Activated naive CD4-positive, alpha-beta T cell treated with anti-CD3 and anti-CD28 coated beads for 36 hours (primary cell): ENCODE measurements at regions of chr19 and their contacts with region 1.

Region 1: DNA sequence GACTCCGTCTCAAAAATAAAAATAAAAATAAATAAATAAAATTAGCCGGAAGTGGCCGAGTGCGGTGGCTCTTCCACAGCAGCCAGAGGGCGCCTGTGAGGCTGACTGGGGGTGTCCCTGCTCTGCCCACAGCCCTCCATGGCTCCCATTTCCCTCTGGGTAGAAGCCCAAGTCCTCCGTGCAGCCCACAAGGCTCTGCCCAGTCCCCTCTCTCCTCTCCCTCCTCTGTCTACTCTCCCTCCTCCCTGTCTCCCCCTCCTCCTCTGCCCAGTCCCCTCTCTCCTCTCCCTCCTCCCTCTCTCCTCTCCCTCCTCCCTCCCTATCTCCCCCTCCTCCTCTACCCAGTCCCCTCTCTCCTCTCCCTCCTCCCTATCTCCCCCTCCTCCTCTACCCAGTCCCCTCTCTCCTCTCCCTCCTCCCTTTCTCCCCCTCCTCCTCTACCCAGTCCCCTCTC is 20.4 kb downstream of the MISP start:
- DNase-seq: peak; percentile 65
- H3K4me3 Mint-ChIP-seq: no peak overlapping the region
- H3K27ac Mint-ChIP-seq: no peak overlapping the region
- H3K4me1 Mint-ChIP-seq: peaks cover 3% of the 10 kb centered on the region
- H3K27me3 Mint-ChIP-seq: no peaks in the 10 kb centered on the region

Region 2: DNA sequence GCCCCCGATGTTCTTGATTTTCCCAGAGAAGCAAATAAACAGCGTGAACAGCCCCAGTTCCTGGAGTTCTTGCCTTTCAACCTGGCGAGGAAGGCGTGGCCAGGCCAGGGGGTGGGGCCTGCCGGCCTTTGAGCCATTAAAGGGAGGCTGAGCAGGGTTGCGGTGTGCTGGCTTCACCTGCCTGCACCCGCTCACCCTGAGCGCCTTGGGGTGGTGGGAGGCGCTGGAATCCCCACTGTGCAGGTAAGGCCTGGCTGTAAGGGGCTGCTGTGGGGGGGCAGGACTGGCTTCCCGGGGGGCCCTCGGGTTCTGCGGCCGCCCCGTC is 23.1 kb before region 1 on chr19:
- CTCF ChIA-PET with region 1: no interaction called
- intact Hi-C with region 1: no loop called
- DNase-seq: no peak
- H3K4me3 Mint-ChIP-seq: no peak overlapping the region
- H3K27ac Mint-ChIP-seq: no peak overlapping the region
- H3K4me1 Mint-ChIP-seq: no peaks in the 10 kb centered on the region
- H3K27me3 Mint-ChIP-seq: no peaks in the 10 kb centered on the region

Region 3: GRCh38 chr19:984165-984967 is 213.0 kb after region 1 on chr19 and contains the start of gene WDR18:
- CTCF ChIA-PET with region 1: interaction called, 4 read pairs
- intact Hi-C with region 1: loop called (anchors 2 kb)
- DNase-seq: peak; percentile 94
- H3K4me3 Mint-ChIP-seq: peak within 1 kb of the TSS; percentile 92
- H3K27ac Mint-ChIP-seq: peak within 1 kb of the TSS; percentile 91
- H3K4me1 Mint-ChIP-seq: peaks cover 21% of the 10 kb centered on the region
- H3K27me3 Mint-ChIP-seq: no peaks in the 10 kb centered on the region
- total RNA-seq, gene WDR18: 77.8 to 82.0 TPM

Region 4: DNA sequence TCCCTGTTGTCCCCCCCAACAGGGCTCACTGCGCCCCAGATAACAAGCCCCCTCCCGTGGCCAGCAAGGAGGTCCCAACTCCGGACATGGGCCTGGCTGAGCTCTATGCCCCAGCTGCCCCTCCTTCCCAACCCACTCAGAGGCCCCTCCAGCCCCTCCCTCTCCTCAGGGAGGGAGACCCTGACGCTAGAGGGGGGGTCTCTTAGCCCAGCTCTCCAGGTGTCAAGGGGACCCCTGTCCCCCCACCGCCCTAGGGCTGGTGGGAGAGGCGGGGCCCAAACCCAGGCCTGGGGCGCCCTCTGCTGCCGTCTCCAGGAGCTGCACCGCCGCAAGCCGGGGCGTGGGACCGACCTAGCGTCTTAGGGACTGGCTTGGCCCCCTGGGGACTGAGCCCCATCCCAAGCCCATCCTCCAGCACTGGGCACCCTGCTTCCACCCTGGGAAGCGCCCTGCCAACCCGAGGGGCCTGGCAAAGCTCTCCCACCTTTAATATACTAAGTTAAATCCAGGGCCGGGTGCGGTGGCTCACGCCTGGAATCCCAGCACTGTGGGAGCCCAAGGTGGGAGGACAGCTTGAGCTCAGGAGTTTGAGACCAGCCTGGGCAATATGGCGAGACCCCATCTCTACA is 230.3 kb after region 1 on chr19:
- CTCF ChIA-PET with region 1: no interaction called
- intact Hi-C with region 1: loop called (anchors 1 kb)
- DNase-seq: peak; percentile 73
- H3K4me3 Mint-ChIP-seq: no peak overlapping the region
- H3K27ac Mint-ChIP-seq: no peak overlapping the region
- H3K4me1 Mint-ChIP-seq: peaks cover 7% of the 10 kb centered on the region
- H3K27me3 Mint-ChIP-seq: peaks cover 29% of the 10 kb centered on the region